ENCODE measurements at regions of chr5 and their contacts with region 1.

Region 1: DNA sequence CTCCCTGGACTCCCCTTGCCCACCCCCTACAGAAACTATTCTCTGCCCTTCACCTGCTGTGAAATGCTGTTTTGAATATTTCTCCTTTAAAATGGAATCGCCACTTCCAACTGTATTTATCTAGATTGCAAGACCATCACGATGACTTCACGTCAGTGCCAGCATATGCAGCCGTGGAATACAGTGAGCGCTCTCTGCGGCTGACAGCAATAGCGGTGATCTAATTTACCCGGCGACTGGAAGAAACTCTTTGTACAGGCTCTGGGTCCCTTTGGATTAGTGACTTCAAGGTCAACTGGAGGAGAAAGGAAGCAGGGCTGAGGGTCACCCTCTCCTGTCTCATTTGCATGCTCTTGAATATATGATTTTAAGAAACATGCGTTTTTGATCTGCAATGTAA is 192.0 kb downstream of the IRX1 start:
- DNase-seq: no peak
- ATAC-seq: no peak
- H3K4me3 ChIP-seq: no peak overlapping the region
- H3K27ac ChIP-seq: no peak overlapping the region
- H3K4me1 ChIP-seq: no peaks in the 10 kb centered on the region
- H3K27me3 ChIP-seq: no peaks in the 10 kb centered on the region
- CTCF ChIP-seq: no peak
- EP300 ChIP-seq: no peak
- POLR2A ChIP-seq: no peak
- RAD21 ChIP-seq: no peak

Region 2: GRCh38 chr5:3856036-3856435 is 68.4 kb after region 1 on chr5:
- CTCF ChIA-PET with region 1: no interaction called
- POLR2A ChIA-PET with region 1: no interaction called
- in situ Hi-C with region 1: no loop called
- intact Hi-C with region 1: loop called (anchors 2 kb)
- DNase-seq: no peak
- ATAC-seq: no peak
- H3K4me3 ChIP-seq: no peak overlapping the region
- H3K27ac ChIP-seq: no peak overlapping the region
- H3K4me1 ChIP-seq: no peaks in the 10 kb centered on the region
- H3K27me3 ChIP-seq: no peaks in the 10 kb centered on the region; a peak in 1 of 5 replicates
- CTCF ChIP-seq: no peak
- EP300 ChIP-seq: no peak
- POLR2A ChIP-seq: no peak
- RAD21 ChIP-seq: no peak

Measured in HepG2 (cell line).